AG04450 (cell line): ENCODE measurements at regions of chr10 and their contacts with region 1.

Region 1: GRCh38 chr10:23994479-23995046 is 214.4 kb upstream of the KIAA1217 start:
- DNase-seq: peak; percentile 7
- H3K4me3 ChIP-seq: no peak overlapping the region
- H3K27ac ChIP-seq: no peak overlapping the region
- H3K27me3 ChIP-seq: no peaks in the 10 kb centered on the region
- CTCF ChIP-seq: peak; percentile 84

Region 2: DNA sequence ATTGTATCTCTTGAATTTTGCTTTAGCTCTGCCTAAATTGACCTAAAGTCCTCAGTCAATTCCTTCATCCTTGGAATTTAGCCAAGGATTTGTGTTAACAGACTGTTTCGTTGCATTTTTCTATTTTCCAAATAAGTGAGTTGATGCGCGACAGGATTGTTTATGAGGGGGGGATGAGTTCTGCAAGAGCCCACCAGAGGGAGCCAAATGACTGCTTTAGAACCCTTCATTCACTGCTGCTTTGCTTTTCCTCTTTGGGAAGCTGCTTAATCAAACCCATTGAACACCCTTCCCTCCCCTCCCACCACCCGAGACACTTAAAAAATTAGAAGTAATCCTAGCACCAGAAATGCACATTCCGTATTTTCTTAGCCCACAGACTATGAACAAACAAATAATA is 836.2 kb before region 1 on chr10:
- CTCF ChIA-PET with region 1: interaction called, 11 read pairs
- POLR2A ChIA-PET with region 1: no interaction called
- DNase-seq: peak; percentile 30
- H3K4me3 ChIP-seq: no peak overlapping the region
- H3K27ac ChIP-seq: no peak overlapping the region
- H3K27me3 ChIP-seq: peaks cover 4% of the 10 kb centered on the region
- CTCF ChIP-seq: peak; percentile 90

Region 3: GRCh38 chr10:24153031-24153430 is 158.5 kb after region 1 on chr10:
- CTCF ChIA-PET with region 1: no interaction called
- POLR2A ChIA-PET with region 1: no interaction called
- DNase-seq: no peak
- H3K4me3 ChIP-seq: no peak overlapping the region
- H3K27ac ChIP-seq: no peak overlapping the region
- H3K27me3 ChIP-seq: no peaks in the 10 kb centered on the region
- CTCF ChIP-seq: no peak

Region 4: GRCh38 chr10:24360282-24361127 is 365.9 kb after region 1 on chr10:
- CTCF ChIA-PET with region 1: interaction called, 46 read pairs
- POLR2A ChIA-PET with region 1: no interaction called
- DNase-seq: peak; percentile 49
- H3K4me3 ChIP-seq: no peak overlapping the region
- H3K27ac ChIP-seq: no peak overlapping the region
- H3K27me3 ChIP-seq: no peaks in the 10 kb centered on the region
- CTCF ChIP-seq: peak; percentile 87

Region 5: DNA sequence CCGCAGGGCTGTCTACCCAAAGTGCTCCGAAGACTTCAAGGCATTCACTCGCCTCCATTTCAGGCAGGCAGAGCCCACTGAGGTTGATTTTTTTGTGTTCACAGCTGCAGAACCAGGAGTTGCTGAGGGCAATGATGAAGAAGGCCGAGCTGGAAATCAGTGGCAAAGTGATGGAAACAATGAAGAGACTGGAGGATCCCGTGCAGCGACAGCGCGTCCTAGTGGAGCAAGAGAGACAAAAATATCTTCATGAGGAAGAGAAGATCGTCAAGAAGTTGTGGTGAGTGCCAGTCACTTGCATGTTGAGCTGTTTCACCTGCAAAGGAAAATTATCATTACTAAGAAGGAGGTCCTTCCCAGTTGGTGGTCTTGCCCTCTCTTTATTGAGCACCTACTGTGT is 518.6 kb after region 1 on chr10:
- CTCF ChIA-PET with region 1: interaction called, 94 read pairs
- POLR2A ChIA-PET with region 1: no interaction called
- DNase-seq: no peak
- H3K4me3 ChIP-seq: no peak overlapping the region
- H3K27ac ChIP-seq: no peak overlapping the region
- H3K27me3 ChIP-seq: no peaks in the 10 kb centered on the region
- CTCF ChIP-seq: peak; percentile 69

Region 6: GRCh38 chr10:24528946-24529345 is 534.4 kb after region 1 on chr10:
- CTCF ChIA-PET with region 1: interaction called, 12 read pairs
- POLR2A ChIA-PET with region 1: no interaction called
- DNase-seq: no peak
- H3K4me3 ChIP-seq: no peak overlapping the region
- H3K27ac ChIP-seq: no peak overlapping the region
- H3K27me3 ChIP-seq: no peaks in the 10 kb centered on the region
- CTCF ChIP-seq: no peak